ENCODE measurements at regions of chr12 and their contacts with region 1.

Region 1: GRCh38 chr12:2812290-2813213 is at the start of gene ITFG2:
- DNase-seq: peak; percentile 91 to 98
- ATAC-seq: peak; percentile 93 to 98 (median 93)
- H3K4me3 ChIP-seq: peak within 1 kb of the TSS; percentile 94
- H3K4me3 Mint-ChIP-seq: peak within 1 kb of the TSS; percentile 100
- H3K27ac ChIP-seq: peak within 1 kb of the TSS; percentile 94
- H3K27ac Mint-ChIP-seq: peak within 1 kb of the TSS; percentile 97 to 100
- H3K4me1 ChIP-seq: peaks cover 9% of the 10 kb centered on the region
- H3K4me1 Mint-ChIP-seq: peaks cover 18 to 24% of the 10 kb centered on the region in 2 donors
- H3K27me3 ChIP-seq: no peaks in the 10 kb centered on the region
- H3K27me3 Mint-ChIP-seq: no peaks in the 10 kb centered on the region
- CTCF ChIP-seq: no peak
- total RNA-seq, gene ITFG2: 58.6 to 72.0 (median 59.9) TPM

Region 2: GRCh38 chr12:2691006-2691344 is 121.6 kb before region 1 on chr12:
- intact Hi-C with region 1: loop called (anchors 2 kb)
- DNase-seq: peak; percentile 46 to 78
- ATAC-seq: peak; percentile 74 to 77 (median 75)
- H3K4me3 ChIP-seq: peak overlapping the region; percentile 76
- H3K4me3 Mint-ChIP-seq: peak overlapping the region; percentile 94
- H3K27ac ChIP-seq: peak overlapping the region; percentile 83
- H3K27ac Mint-ChIP-seq: peak overlapping the region; percentile 84 to 85
- H3K4me1 ChIP-seq: peaks cover 25% of the 10 kb centered on the region
- H3K4me1 Mint-ChIP-seq: peaks cover 36 to 39% of the 10 kb centered on the region in 2 donors
- H3K27me3 ChIP-seq: no peaks in the 10 kb centered on the region
- H3K27me3 Mint-ChIP-seq: peaks cover 2 to 5% of the 10 kb centered on the region in 2 donors
- CTCF ChIP-seq: peak; percentile 16

Region 3: GRCh38 chr12:2795291-2796186 is 17.0 kb before region 1 on chr12:
- intact Hi-C with region 1: loop called (anchors 2 kb)
- DNase-seq: peak; percentile 65 to 83
- ATAC-seq: peak; percentile 69 to 78 (median 71)
- H3K4me3 ChIP-seq: peak overlapping the region; percentile 58
- H3K4me3 Mint-ChIP-seq: peak overlapping the region; percentile 86
- H3K27ac ChIP-seq: no peak overlapping the region
- H3K27ac Mint-ChIP-seq: peak overlapping the region; percentile 49 to 86
- H3K4me1 ChIP-seq: peaks cover 16% of the 10 kb centered on the region
- H3K4me1 Mint-ChIP-seq: peaks cover 10 to 18% of the 10 kb centered on the region in 2 donors
- H3K27me3 ChIP-seq: no peaks in the 10 kb centered on the region
- H3K27me3 Mint-ChIP-seq: no peaks in the 10 kb centered on the region
- CTCF ChIP-seq: no peak

Region 4: GRCh38 chr12:2877047-2877952 is 64.7 kb after region 1 on chr12 and contains the starts of genes FOXM1 and RHNO1:
- intact Hi-C with region 1: loop called (anchors 1 kb)
- DNase-seq: peak; percentile 91 to 93
- ATAC-seq: peak; percentile 85 to 91 (median 88)
- H3K4me3 ChIP-seq: peak within 1 kb of the TSS; percentile 94
- H3K4me3 Mint-ChIP-seq: peak within 1 kb of the TSS; percentile 98
- H3K27ac ChIP-seq: peak within 1 kb of the TSS; percentile 91
- H3K27ac Mint-ChIP-seq: peak within 1 kb of the TSS; percentile 95 to 98
- H3K4me1 ChIP-seq: peaks cover 18% of the 10 kb centered on the region
- H3K4me1 Mint-ChIP-seq: peaks cover 21 to 27% of the 10 kb centered on the region in 2 donors
- H3K27me3 ChIP-seq: no peaks in the 10 kb centered on the region
- H3K27me3 Mint-ChIP-seq: no peaks in the 10 kb centered on the region
- CTCF ChIP-seq: no peak
- total RNA-seq, gene FOXM1: 1.8 to 3.6 (median 2.6) TPM
- total RNA-seq, gene RHNO1: 9.2 to 13.6 (median 9.4) TPM

Region 5: GRCh38 chr12:2890388-2891239 is 78.1 kb after region 1 on chr12 and contains the start of gene TULP3:
- intact Hi-C with region 1: loop called (anchors 1 kb)
- DNase-seq: peak; percentile 98 to 99
- ATAC-seq: peak; percentile 95 to 99 (median 96)
- H3K4me3 ChIP-seq: peak within 1 kb of the TSS; percentile 80
- H3K4me3 Mint-ChIP-seq: peak within 1 kb of the TSS; percentile 94
- H3K27ac ChIP-seq: peak within 1 kb of the TSS; percentile 77
- H3K27ac Mint-ChIP-seq: peak within 1 kb of the TSS; percentile 89 to 95
- H3K4me1 ChIP-seq: peaks cover 17% of the 10 kb centered on the region
- H3K4me1 Mint-ChIP-seq: peaks cover 16 to 24% of the 10 kb centered on the region in 2 donors
- H3K27me3 ChIP-seq: no peaks in the 10 kb centered on the region
- H3K27me3 Mint-ChIP-seq: no peaks in the 10 kb centered on the region
- CTCF ChIP-seq: no peak
- total RNA-seq, gene TULP3: 5.1 to 8.7 (median 6.2) TPM

Region 6: DNA sequence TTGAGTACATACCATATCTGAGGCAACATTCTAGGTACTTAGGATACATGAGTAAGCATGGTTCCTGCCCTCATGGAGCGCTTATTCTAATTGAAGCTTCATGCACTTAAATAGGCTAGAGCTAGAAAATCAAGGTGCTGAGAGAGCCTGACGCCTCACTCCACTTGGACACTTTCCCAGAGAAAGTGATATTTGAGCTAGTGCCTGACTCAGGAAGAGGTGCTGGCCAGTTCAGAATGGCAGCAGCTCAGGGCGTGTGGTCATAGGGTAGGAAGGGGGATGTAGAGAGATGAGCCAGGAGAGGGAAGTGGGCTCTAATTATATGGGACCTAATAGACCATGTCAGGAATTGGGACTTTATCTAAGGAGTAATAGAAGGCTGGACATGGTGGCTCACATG is 111.5 kb after region 1 on chr12:
- intact Hi-C with region 1: no loop called
- DNase-seq: no peak
- ATAC-seq: no peak
- H3K4me3 ChIP-seq: no peak overlapping the region
- H3K4me3 Mint-ChIP-seq: no peak overlapping the region
- H3K27ac ChIP-seq: no peak overlapping the region
- H3K27ac Mint-ChIP-seq: no peak overlapping the region
- H3K4me1 ChIP-seq: no peaks in the 10 kb centered on the region
- H3K4me1 Mint-ChIP-seq: no peaks in the 10 kb centered on the region
- H3K27me3 ChIP-seq: no peaks in the 10 kb centered on the region
- H3K27me3 Mint-ChIP-seq: no peaks in the 10 kb centered on the region
- CTCF ChIP-seq: no peak